ENCODE measurements at regions of chr10 and their contacts with region 1.

Region 1: GRCh38 chr10:45594276-45595106 is 78.1 kb downstream of the ZFAND4 start:
- DNase-seq: peak; percentile 94
- ATAC-seq: peak; percentile 93
- H3K4me3 Mint-ChIP-seq: peak overlapping the region; percentile 77
- H3K27ac Mint-ChIP-seq: peak overlapping the region; percentile 67
- H3K4me1 Mint-ChIP-seq: peaks cover 30% of the 10 kb centered on the region
- H3K27me3 Mint-ChIP-seq: peaks cover 5% of the 10 kb centered on the region

Region 2: DNA sequence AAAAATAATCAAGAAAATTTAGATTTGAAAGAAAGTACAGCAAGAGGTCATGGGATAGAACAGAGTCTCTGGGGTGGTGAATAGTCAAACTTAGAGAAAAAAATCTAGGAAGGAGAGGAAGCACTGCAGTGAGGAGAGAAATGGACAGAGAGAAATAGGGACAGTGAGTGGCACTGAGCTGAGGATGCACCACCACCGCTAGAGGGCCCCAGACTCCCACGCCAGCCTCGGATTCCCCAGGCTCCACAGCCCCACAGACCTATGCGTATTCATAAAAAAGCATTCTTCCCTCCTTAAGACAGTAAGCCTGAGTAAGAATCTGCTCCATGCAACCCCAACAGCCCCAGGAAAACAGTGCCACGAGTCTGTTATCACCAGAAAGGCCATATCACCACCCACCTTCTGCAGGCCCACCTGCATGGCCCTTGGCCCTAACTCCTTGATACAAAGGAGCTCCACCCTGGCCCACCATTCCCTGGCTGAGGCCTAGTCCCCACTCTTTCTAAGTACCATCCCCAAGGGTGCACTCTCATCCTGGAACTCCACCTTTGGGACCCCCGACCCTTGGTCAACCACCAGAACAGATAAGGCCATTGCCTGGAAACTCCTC is 129.4 kb before region 1 on chr10:
- CTCF ChIA-PET with region 1: interaction called, 4 read pairs
- POLR2A ChIA-PET with region 1: no interaction called
- intact Hi-C with region 1: loop called (anchors 1 kb)
- DNase-seq: peak; percentile 89
- ATAC-seq: peak; percentile 100
- H3K4me3 Mint-ChIP-seq: no peak overlapping the region
- H3K27ac Mint-ChIP-seq: no peak overlapping the region
- H3K4me1 Mint-ChIP-seq: peaks cover 11% of the 10 kb centered on the region
- H3K27me3 Mint-ChIP-seq: no peaks in the 10 kb centered on the region

Region 3: DNA sequence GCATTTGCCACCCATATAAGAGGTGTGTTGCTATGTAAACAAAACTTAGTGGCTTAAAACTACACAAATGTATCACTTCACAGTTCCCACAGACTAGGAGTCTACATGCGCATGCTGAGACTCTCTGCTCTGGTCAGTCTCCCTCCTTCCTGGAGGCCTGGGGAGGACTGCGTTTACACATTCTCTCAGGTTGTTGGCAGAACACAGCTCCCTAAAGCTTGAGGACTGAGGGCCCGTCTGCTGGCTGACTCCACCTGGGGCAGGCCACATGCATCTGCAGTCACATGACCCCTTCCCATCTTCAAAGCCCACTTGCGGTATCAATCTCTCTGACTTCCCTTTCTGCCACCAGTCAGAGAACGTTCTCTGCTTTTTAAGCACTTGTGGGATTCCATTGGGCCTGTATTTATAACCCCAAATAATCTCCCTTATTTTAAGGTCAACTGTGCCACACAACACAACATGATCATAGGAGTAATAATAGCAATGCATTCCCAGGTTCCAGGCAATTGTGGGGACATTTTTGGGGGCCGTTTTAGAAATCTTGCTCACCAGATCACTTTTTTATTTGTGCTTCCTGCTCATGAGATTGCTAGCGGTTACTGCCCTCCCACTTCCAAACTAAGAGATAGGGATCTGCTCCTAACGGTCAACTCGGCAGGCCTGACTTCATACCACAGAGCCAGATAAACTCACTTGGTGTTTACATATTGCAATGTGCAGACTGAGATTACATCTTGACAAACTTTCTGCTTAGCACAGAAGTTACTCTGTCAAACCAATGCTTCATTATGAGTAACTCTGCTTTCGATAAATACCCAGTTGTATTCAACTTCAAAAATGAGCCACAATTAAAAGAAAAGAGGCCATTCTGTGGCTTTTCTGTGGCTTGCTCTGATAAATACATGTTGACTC is 124.1 kb before region 1 on chr10:
- CTCF ChIA-PET with region 1: interaction called, 4 read pairs
- POLR2A ChIA-PET with region 1: no interaction called
- intact Hi-C with region 1: loop called (anchors 1 kb)
- DNase-seq: peak; percentile 69
- ATAC-seq: peak; percentile 86
- H3K4me3 Mint-ChIP-seq: no peak overlapping the region
- H3K27ac Mint-ChIP-seq: peak overlapping the region; percentile 90
- H3K4me1 Mint-ChIP-seq: peaks cover 16% of the 10 kb centered on the region
- H3K27me3 Mint-ChIP-seq: no peaks in the 10 kb centered on the region

Region 4: DNA sequence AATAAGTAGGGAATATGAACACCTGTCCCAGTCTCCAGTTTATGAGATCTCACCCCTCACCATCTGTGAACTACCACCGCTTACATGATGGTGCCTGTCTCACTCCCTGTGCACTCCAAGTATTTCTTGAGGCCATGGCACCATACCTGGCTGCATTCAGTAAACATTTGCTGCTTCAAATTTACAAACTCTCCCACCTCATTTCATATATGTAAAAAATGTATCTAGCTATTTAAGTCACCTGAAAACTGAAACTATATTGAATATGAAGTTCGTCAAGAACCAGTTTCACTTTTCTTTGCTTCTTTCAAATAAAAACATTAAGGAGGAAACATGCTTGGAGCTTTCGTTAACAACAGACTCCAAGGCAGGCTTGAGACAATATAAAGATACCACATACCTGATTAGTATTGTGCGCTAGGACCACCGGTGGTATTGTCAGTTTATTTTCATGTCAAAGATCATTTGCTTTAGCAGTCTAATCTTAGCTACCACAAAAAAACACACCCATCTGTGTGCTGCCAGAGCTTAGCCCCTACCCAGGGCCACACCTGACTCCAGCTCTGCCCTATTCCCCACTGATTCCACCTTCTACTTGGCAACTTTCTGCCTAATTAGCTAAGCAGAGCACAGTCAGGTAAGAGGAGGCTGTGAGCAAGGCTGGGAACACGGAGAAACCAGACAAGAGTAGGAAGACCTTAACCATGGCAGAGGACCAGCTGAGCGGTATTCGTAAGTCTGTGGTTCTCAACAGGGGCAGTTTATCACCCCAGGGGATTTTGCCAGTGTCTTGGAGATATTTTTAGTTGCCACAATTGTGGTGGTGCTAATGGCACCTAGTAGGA is 13.9 kb before region 1 on chr10:
- CTCF ChIA-PET with region 1: interaction called, 6 read pairs
- POLR2A ChIA-PET with region 1: interaction called, 5 read pairs
- intact Hi-C with region 1: loop called (anchors 1 kb)
- DNase-seq: peak; percentile 41
- ATAC-seq: peak; percentile 68
- H3K4me3 Mint-ChIP-seq: peak overlapping the region; percentile 76
- H3K27ac Mint-ChIP-seq: peak overlapping the region; percentile 95
- H3K4me1 Mint-ChIP-seq: peaks cover 37% of the 10 kb centered on the region
- H3K27me3 Mint-ChIP-seq: no peaks in the 10 kb centered on the region

Region 5: GRCh38 chr10:47164126-47164799 is 1569.8 kb after region 1 on chr10:
- CTCF ChIA-PET with region 1: no interaction called
- POLR2A ChIA-PET with region 1: no interaction called
- intact Hi-C with region 1: no loop called
- DNase-seq: no peak
- ATAC-seq: no peak
- H3K4me3 Mint-ChIP-seq: no peak overlapping the region
- H3K27ac Mint-ChIP-seq: no peak overlapping the region
- H3K4me1 Mint-ChIP-seq: peaks cover 35% of the 10 kb centered on the region
- H3K27me3 Mint-ChIP-seq: peaks cover 2% of the 10 kb centered on the region